ENCODE measurements at regions of chr1 and their contacts with region 1.

Region 1: DNA sequence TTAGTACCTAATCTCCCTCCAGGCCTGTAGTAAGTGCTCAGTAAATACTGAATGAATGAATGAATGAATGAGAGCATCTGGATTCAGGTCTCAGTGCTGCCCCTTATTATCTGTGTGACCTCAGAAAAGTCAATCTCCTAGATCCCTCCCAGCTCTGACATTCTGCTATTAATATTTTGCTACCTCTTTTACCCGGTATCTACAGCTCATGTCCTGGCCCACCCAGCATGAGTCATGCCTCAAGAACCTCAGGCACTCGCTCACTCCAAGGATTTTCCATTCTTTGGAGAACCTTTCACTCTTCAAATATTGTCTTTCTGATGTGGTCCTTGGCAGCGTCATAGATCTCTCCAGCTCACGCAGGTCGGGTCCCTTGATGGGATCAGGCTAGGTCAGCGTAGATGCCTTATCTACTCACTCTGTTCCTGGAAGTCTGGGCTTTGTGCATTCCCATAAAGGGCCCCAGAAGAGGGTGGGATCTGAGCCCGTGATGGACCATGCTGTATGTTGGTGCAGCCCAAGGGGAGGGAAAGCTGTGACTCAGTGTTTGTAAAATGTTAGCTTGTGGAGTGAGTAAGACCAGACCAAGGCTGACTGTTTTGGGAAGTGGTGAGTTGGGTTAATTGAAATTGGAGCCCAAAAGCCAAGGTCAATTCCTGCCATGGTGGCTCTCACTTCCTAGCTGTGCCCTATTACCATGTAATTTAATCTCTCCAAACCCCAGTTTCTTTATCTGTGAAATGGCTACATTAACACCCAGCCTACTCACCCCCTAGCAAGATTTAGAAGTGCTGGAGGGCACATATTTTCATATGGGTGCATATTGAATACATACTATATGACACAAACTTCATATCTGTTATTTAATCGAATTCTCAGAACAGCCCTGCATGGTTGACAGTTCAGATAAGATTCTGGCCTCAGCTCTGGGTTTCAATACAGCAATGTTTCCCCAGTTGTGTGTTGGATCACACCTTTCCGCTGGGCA is 214.1 kb upstream of the USP24 start:
- DNase-seq: peak; percentile 95 to 100
- H3K4me3 ChIP-seq: no peak overlapping the region
- H3K27ac ChIP-seq: peak overlapping the region; percentile 77
- H3K4me1 ChIP-seq: peaks cover 47% of the 10 kb centered on the region
- H3K27me3 ChIP-seq: no peaks in the 10 kb centered on the region
- CTCF ChIP-seq: no peak

Region 2: GRCh38 chr1:54865238-54866073 is 563.8 kb before region 1 on chr1:
- CTCF ChIA-PET with region 1: no interaction called
- POLR2A ChIA-PET with region 1: no interaction called
- intact Hi-C with region 1: no loop called
- DNase-seq: no peak
- H3K4me3 ChIP-seq: no peak overlapping the region
- H3K27ac ChIP-seq: peak overlapping the region; percentile 44
- H3K4me1 ChIP-seq: peaks cover 67% of the 10 kb centered on the region
- H3K27me3 ChIP-seq: no peaks in the 10 kb centered on the region
- CTCF ChIP-seq: no peak

Region 3: DNA sequence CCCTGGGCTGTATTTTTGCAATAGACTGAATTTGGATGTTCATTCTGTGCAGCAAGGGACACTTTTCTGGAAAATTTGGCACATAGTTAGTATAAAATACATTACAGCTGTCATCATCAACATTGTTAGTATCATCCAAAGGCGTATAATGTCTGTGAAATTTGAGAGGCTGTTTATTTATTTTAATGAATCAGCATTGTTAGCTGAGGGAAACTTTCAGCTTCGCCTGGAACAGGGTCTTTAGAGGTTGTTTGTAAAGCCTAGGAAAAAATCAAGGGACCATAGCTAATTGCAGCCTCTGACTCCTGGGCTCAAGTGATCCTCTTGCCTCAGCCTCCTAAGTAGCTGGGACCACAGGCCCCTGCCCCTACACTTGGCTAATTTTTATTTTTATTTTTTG is 107.3 kb before region 1 on chr1:
- CTCF ChIA-PET with region 1: no interaction called
- POLR2A ChIA-PET with region 1: no interaction called
- intact Hi-C with region 1: loop called (anchors 5 kb)
- DNase-seq: peak in 1 of 2 experiments; percentile 51
- H3K4me3 ChIP-seq: no peak overlapping the region
- H3K27ac ChIP-seq: peak overlapping the region; percentile 24
- H3K4me1 ChIP-seq: peaks cover 25% of the 10 kb centered on the region
- H3K27me3 ChIP-seq: no peaks in the 10 kb centered on the region
- CTCF ChIP-seq: no peak

Region 4: GRCh38 chr1:55402142-55402541 is 27.1 kb before region 1 on chr1:
- CTCF ChIA-PET with region 1: no interaction called
- POLR2A ChIA-PET with region 1: no interaction called
- intact Hi-C with region 1: no loop called
- DNase-seq: no peak
- H3K4me3 ChIP-seq: no peak overlapping the region
- H3K27ac ChIP-seq: no peak overlapping the region
- H3K4me1 ChIP-seq: no peaks in the 10 kb centered on the region
- H3K27me3 ChIP-seq: no peaks in the 10 kb centered on the region
- CTCF ChIP-seq: no peak

Region 5: GRCh38 chr1:55580845-55581332 is 151.7 kb after region 1 on chr1:
- CTCF ChIA-PET with region 1: no interaction called
- POLR2A ChIA-PET with region 1: no interaction called
- intact Hi-C with region 1: loop called (anchors 1 kb)
- DNase-seq: peak; percentile 8 to 81
- H3K4me3 ChIP-seq: no peak overlapping the region
- H3K27ac ChIP-seq: peak overlapping the region; percentile 53
- H3K4me1 ChIP-seq: peaks cover 27% of the 10 kb centered on the region
- H3K27me3 ChIP-seq: no peaks in the 10 kb centered on the region
- CTCF ChIP-seq: no peak

Region 6: DNA sequence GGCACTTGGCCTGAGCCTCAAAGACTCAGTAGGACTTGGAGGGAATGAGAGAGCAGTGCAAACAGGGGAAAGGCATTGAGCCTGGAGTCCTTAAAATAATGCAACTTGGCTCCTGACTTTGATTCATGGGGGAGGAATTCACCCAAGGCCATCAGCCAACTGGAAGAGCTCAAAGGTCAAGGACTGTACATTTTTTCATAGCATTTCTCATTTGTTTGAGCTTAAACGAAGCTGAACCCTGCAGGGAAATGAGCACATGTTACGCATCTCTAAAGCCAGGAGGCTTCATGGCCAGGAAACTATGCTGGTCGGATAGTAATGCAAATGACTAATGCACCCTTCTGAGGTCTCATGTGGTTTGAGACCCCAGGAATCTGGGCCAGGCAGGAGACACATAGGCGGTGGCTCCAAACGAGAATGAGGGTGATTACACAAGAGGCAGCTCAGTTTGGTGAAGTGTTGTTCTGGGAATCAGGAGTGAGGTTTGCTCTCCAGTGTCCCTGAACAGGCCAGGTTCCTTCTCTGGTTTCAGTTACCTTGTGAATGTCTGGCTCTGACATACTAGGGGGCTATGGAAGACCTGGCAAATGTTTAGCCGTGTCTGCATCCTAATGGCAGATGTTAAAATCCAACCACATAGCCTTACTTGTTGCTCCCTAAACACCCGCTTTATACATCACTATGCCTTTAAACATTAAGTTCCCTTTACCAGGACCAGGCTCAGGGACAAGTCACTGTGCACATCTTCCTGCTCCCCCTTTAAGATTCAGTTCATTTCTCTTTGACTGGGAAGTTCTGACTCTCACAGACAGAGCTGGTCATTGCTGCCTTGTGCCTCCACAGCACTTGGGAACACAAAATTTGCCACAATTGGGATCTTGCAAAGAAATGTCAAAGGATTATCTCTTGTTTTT is 289.8 kb after region 1 on chr1:
- CTCF ChIA-PET with region 1: no interaction called
- POLR2A ChIA-PET with region 1: interaction called, 5 read pairs
- intact Hi-C with region 1: loop called (anchors 1 kb)
- DNase-seq: peak; percentile 85 to 99
- H3K4me3 ChIP-seq: no peak overlapping the region
- H3K27ac ChIP-seq: peak overlapping the region; percentile 92
- H3K4me1 ChIP-seq: peaks cover 40% of the 10 kb centered on the region
- H3K27me3 ChIP-seq: no peaks in the 10 kb centered on the region
- CTCF ChIP-seq: no peak

Region 7: DNA sequence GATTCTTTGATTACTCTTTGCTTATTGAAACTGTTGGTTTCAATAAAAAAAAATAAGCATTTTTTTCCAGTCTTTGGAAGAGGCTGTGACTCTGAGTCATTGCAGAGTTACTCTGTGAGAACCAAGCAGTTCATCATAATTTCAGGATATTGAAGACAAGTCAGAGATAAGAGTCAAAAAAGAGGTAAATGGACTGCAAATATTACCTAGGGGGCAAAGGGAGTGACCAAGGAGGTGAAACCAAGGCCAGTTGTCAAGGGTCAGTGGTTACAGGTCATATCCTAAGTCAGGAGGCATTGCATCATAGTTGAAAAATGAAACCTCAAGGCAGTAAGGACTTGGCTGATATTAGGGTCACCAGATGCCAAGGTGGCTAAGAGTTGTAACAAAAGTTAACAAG is 383.0 kb after region 1 on chr1:
- CTCF ChIA-PET with region 1: no interaction called
- POLR2A ChIA-PET with region 1: no interaction called
- intact Hi-C with region 1: loop called (anchors 1 kb)
- DNase-seq: peak; percentile 30 to 84
- H3K4me3 ChIP-seq: no peak overlapping the region
- H3K27ac ChIP-seq: peak overlapping the region; percentile 83
- H3K4me1 ChIP-seq: peaks cover 40% of the 10 kb centered on the region
- H3K27me3 ChIP-seq: no peaks in the 10 kb centered on the region
- CTCF ChIP-seq: no peak

Region 8: DNA sequence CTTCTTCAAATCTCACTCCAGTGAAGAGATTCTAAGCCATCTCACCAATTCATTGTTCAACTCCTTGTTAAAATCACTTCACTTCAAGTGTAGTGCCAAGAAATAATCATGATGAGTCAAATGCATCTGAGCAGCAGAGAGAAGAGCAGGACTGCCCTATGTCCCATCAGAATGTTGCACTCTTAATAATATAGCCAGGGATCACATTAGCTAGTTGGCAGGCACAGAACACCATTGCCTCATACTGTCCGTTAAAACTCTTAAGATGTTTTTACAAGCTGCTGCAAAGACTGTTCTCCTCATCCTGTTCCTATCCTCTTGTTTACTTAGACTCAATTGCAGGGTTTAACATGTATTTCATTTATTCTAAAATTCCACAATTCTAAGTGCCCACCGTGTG is 717.2 kb after region 1 on chr1:
- CTCF ChIA-PET with region 1: no interaction called
- POLR2A ChIA-PET with region 1: no interaction called
- intact Hi-C with region 1: no loop called
- DNase-seq: no peak
- H3K4me3 ChIP-seq: no peak overlapping the region
- H3K27ac ChIP-seq: no peak overlapping the region
- H3K4me1 ChIP-seq: no peaks in the 10 kb centered on the region
- H3K27me3 ChIP-seq: no peaks in the 10 kb centered on the region
- CTCF ChIP-seq: no peak

Region 9: DNA sequence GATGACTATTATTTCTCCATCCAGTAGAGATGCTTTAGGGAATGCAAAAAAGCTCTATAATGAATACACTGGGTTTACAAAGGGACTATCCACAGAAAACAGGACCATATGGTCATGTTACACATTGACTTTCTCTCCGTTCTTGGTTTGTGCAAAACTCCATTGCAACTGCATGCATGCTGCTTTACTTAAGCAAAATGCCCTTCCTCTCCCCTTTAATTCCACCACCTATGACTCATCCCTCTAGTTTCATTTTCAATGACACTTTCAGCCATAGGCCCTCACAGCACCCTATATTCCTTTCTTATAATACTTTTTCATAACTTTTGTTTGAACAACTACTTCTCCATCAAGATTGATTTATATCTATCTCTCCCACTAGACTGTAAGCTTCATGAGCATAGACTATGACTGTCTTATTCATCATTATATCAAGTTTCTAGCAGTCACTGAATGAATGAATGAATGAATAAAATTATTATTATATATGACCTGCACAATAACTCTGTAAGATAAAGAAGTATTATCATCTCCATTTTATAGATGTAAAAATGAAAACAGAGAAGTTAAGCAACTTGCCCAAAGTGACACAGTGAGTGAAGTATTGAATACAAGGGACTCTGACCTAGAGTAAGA is 901.3 kb after region 1 on chr1:
- CTCF ChIA-PET with region 1: no interaction called
- POLR2A ChIA-PET with region 1: no interaction called
- intact Hi-C with region 1: loop called (anchors 2 kb)
- DNase-seq: peak in 1 of 2 experiments; percentile 46
- H3K4me3 ChIP-seq: no peak overlapping the region
- H3K27ac ChIP-seq: peak overlapping the region; percentile 55
- H3K4me1 ChIP-seq: peaks cover 46% of the 10 kb centered on the region
- H3K27me3 ChIP-seq: no peaks in the 10 kb centered on the region
- CTCF ChIP-seq: no peak

Region 10: DNA sequence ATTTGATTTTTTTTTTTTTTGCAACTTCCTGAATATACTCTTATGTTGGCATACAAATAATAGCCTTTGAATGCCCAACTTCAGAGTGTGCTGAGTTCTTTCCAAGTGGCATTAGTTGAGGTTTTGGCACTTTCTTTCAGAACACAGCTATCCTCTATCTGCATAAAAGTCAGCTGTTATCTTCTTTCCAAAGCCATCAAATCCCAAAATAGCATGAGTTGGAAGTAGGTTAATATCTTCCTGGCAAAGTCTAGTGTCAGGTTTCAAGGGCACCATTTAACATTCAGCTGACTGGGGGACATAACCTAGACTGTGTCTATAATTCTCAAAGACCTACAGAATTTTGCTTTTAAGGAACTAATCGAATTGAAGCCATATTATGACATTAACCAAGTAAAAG is 926.2 kb after region 1 on chr1:
- CTCF ChIA-PET with region 1: no interaction called
- POLR2A ChIA-PET with region 1: no interaction called
- intact Hi-C with region 1: no loop called
- DNase-seq: no peak
- H3K4me3 ChIP-seq: no peak overlapping the region
- H3K27ac ChIP-seq: no peak overlapping the region
- H3K4me1 ChIP-seq: no peaks in the 10 kb centered on the region
- H3K27me3 ChIP-seq: no peaks in the 10 kb centered on the region
- CTCF ChIP-seq: no peak

Region 11: GRCh38 chr1:56578963-56579875 is 1150.0 kb after region 1 on chr1 and contains the start of gene PLPP3:
- CTCF ChIA-PET with region 1: interaction called, 3 read pairs
- POLR2A ChIA-PET with region 1: no interaction called
- intact Hi-C with region 1: loop called (anchors 1 kb)
- DNase-seq: peak; percentile 81 to 86
- H3K4me3 ChIP-seq: peak within 1 kb of the TSS; percentile 87
- H3K27ac ChIP-seq: peak within 1 kb of the TSS; percentile 57
- H3K4me1 ChIP-seq: peaks cover 40% of the 10 kb centered on the region
- H3K27me3 ChIP-seq: no peaks in the 10 kb centered on the region
- CTCF ChIP-seq: peak; percentile 65
- total RNA-seq, gene PLPP3: 16.5 and 22.4 TPM in 2 replicates